ENCODE measurements at regions of chr9 and their contacts with region 1.

Region 1: GRCh38 chr9:16133556-16134227 is 580.8 kb downstream of the CCDC171 start:
- DNase-seq: peak; percentile 26 to 28
- ATAC-seq: peak in 6 of 8 donors; percentile 28 to 59 (median 32)
- H3K4me3 ChIP-seq: no peak overlapping the region
- H3K27ac ChIP-seq: no peak overlapping the region
- H3K4me1 ChIP-seq: peaks cover 0 to 17% (median 5%) of the 10 kb centered on the region in 9 donors
- H3K27me3 ChIP-seq: peaks cover 0 to 4% (median 0%) of the 10 kb centered on the region in 7 donors
- CTCF ChIP-seq: peak; percentile 24 to 69 (median 56)

Region 2: GRCh38 chr9:15873569-15874177 is 260.0 kb before region 1 on chr9:
- intact Hi-C with region 1: loop called in 7 of 10 experiments (anchors 5 to 10 kb)
- DNase-seq: no peak
- ATAC-seq: no peak
- H3K4me3 ChIP-seq: no peak overlapping the region
- H3K27ac ChIP-seq: no peak overlapping the region
- H3K4me1 ChIP-seq: no peaks in the 10 kb centered on the region
- H3K27me3 ChIP-seq: no peaks in the 10 kb centered on the region
- CTCF ChIP-seq: peak; percentile 34 to 84 (median 72)

Region 3: DNA sequence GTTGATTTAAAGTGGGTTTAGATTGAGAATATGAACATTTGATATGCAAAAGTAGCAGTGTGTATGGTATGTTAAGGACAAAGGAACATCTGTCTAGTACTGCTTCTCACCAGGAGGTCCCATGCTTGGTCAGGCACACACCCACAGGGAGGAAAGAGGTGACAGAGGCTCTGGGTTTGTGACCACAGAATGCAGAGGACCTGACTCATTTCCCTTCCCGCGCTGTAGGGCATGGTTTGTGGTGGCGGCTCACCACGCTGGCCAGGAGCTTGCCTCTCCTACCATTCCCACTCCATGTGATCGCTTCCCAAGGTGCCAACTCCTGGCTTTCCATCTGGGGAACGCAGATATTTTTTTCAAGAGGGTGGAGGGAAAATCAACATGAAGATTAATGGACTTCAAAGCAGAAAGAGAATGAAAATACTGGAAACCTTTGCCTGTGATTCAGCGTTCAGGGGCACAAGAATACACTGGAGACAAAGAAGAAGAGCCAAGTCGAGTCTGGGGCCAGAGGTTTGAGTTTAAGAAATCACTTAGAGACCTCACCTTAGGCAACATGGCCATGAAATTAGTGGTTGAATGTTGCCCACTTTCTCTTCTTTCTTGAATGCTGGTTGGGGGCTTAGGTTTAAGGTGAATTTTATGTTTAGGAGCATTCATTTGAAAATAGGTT is 103.0 kb before region 1 on chr9:
- intact Hi-C with region 1: loop called in 1 of 10 experiments (anchors 10 kb)
- DNase-seq: no peak
- ATAC-seq: no peak
- H3K4me3 ChIP-seq: no peak overlapping the region
- H3K27ac ChIP-seq: no peak overlapping the region
- H3K4me1 ChIP-seq: no peaks in the 10 kb centered on the region
- H3K27me3 ChIP-seq: no peaks in the 10 kb centered on the region
- CTCF ChIP-seq: no peak

Measured in heart right ventricle (tissue), 16 donors.